HEK293 (cell line): ENCODE measurements at regions of chr16 and their contacts with region 1.

Region 1: GRCh38 chr16:27538508-27538907 is 11.2 kb downstream of the GTF3C1 start:
- H3K4me3 ChIP-seq: no peak overlapping the region
- H3K27ac ChIP-seq: no peak overlapping the region
- H3K4me1 ChIP-seq: no peaks in the 10 kb centered on the region
- CTCF ChIP-seq: no peak

Region 2: DNA sequence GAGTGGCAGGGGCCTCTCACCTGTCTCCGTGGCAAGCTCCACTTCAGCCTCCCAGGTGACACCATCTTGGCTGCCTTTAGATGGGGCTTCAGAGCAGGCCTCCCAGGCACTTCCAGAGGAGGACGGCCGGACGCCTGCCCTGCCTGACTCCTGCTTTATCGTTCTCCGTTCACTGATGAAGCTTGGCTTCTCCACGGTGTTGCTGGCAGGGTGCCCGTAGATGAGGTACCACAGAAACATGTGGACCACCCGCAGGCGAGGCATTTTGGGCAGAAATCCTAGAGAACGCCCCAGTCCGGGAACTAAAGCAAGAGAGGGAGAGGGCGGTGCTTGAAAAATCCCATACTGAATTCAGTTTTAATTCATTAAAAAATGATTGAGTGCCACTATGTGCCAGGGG is 43.3 kb before region 1 on chr16:
- CTCF ChIA-PET with region 1: no interaction called
- POLR2A ChIA-PET with region 1: interaction called, 15 read pairs
- H3K4me3 ChIP-seq: no peak overlapping the region
- H3K27ac ChIP-seq: no peak overlapping the region
- H3K4me1 ChIP-seq: no peaks in the 10 kb centered on the region
- CTCF ChIP-seq: no peak

Region 3: DNA sequence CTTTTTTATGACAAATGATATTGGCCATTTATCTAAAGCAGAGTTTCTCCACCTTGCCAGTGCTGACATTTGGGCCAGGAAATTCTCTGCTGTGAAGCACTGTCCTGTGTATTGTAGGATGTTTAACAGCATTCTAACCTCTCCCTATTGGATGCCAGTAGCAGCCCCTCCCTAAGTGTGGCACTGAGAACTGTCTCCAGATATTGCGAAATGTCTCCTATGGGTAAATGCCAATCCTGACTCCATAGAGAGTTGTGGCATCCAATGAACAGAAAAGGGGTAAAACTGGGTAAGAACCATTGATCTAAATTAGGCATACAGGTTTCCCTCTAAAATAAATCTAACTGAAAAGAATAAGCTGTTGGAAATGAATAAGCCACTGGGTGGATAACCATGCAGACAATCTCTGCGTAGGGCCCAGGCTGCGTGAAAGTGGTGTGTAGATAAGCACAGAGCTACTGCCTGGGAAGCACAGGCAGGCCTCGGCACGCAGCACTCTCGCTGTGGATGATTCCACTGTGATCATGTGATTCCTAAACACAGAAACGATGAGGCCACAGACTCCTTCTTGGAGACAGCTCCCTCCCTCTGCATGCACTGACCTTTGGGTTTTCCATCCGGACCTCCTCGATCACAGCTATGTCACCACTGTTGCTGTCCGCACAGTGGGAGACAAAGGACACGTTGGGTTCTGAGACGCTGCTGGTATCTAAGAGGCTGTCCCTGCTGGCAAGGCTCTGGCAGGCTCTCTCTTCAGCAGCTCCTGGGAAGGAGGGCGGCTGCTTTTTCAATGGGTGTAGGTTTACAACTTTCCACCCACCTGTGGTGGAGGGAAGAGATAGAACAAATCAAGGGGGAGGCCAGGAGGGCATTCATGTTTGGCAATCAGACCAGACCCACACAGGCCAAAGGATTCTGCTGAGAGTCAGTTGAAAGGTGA is 32.9 kb before region 1 on chr16:
- CTCF ChIA-PET with region 1: no interaction called
- POLR2A ChIA-PET with region 1: no interaction called
- H3K4me3 ChIP-seq: no peak overlapping the region
- H3K27ac ChIP-seq: no peak overlapping the region
- H3K4me1 ChIP-seq: no peaks in the 10 kb centered on the region
- CTCF ChIP-seq: no peak